PC-9 (cell line): ENCODE measurements at regions of chr6 and their contacts with region 1.

Region 1: GRCh38 chr6:100479179-100480035 is 14.7 kb upstream of the SIM1 start:
- DNase-seq: no peak
- H3K4me3 ChIP-seq: no peak overlapping the region
- H3K27ac ChIP-seq: no peak overlapping the region
- H3K4me1 ChIP-seq: no peaks in the 10 kb centered on the region
- H3K27me3 ChIP-seq: no peaks in the 10 kb centered on the region
- CTCF ChIP-seq: peak; percentile 83

Region 2: DNA sequence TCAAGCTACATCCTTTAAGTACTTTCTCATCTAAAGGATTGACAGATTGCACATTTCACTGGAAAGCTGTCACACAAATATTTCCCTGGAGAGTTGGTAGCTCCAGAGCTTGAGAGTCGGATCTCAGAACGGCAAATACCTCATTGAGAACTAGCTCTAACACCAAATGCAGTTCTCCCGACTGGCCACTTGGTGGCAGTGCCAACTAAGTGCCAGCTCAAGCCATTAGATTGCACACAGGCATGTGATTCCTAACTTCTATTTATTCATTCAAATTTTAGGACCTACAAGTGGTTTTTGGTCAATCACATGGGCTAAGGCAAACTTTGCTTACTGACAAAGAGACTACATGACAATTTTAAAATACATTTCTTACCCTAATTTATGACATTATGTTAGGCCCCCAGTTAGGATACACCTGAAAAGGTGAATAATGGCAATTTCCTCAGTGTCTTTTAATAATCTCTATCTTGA is 477.5 kb before region 1 on chr6:
- CTCF ChIA-PET with region 1: no interaction called
- POLR2A ChIA-PET with region 1: no interaction called
- intact Hi-C with region 1: loop called (anchors 1 kb)
- DNase-seq: peak; percentile 40 to 43
- H3K4me3 ChIP-seq: no peak overlapping the region
- H3K27ac ChIP-seq: no peak overlapping the region
- H3K4me1 ChIP-seq: no peaks in the 10 kb centered on the region
- H3K27me3 ChIP-seq: no peaks in the 10 kb centered on the region
- CTCF ChIP-seq: peak; percentile 97

Region 3: DNA sequence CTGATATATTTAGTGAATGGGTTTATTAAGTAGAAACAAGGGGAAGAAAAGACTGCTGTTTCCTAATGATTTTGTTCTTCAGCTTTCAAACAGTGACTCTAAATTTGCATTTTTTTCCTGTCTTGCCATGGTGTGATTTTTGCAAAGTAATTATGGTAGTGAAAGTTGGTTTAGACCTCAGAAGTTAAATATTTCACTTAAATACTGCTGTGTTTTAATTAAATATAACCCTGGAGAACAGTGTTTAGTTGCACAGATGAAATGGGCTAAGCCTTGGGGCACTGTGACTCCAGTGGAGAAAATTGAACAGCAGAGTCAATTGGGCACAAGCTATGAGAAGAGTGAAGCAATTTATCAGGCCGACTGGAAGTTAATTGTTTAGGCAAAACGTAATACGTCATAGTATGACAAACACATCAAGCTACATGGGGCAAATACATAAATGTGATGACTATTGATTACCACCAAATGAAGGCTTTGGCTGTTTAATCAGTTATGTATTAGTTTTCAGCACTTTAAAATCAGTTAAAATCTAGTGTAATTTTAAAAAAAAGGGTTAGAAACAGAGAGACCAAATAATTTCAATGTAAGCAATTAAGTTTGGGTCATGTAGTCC is 374.2 kb before region 1 on chr6:
- CTCF ChIA-PET with region 1: no interaction called
- POLR2A ChIA-PET with region 1: no interaction called
- intact Hi-C with region 1: no loop called
- DNase-seq: no peak
- H3K4me3 ChIP-seq: no peak overlapping the region
- H3K27ac ChIP-seq: no peak overlapping the region
- H3K4me1 ChIP-seq: no peaks in the 10 kb centered on the region
- H3K27me3 ChIP-seq: no peaks in the 10 kb centered on the region
- CTCF ChIP-seq: no peak

Region 4: DNA sequence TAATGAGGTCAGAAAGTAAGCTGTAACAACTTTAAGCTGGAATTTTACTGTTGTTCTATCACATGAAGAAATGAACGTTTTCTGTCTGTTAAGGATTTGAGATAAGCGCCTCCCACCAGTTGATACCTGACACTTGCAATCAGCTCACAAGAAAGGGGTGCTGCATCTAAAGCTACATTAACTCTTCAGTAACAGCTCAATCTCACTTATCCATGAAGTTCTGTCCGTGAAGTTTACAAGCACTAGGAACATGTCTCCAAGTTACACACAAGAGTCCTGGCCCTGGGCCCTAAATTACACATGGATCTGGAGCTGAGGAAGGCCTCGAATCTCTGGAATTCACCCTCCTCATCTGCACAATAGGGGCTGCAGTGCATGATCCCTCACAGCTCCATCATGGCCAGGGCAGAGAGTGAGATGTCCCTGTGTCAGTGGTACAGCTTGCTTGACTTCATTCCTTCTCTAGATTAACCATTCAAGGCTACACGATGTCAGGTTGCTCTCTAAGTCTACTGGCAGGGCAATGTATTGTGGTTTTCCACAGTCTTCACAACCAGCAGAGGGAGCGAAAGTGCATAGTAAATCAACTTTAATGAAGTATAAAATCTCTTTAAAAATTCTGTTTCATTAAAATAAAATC is 303.0 kb before region 1 on chr6:
- CTCF ChIA-PET with region 1: no interaction called
- POLR2A ChIA-PET with region 1: no interaction called
- intact Hi-C with region 1: loop called (anchors 2 kb)
- DNase-seq: peak; percentile 42 to 70
- H3K4me3 ChIP-seq: 0 out of 2 replicates have a peak overlapping the region, but pooled peaks have one; percentile 8
- H3K27ac ChIP-seq: peak overlapping the region; percentile 74
- H3K4me1 ChIP-seq: peaks cover 24% of the 10 kb centered on the region
- H3K27me3 ChIP-seq: no peaks in the 10 kb centered on the region
- CTCF ChIP-seq: peak; percentile 67

Region 5: GRCh38 chr6:100347901-100348550 is 131.4 kb before region 1 on chr6:
- CTCF ChIA-PET with region 1: interaction called, 10 read pairs
- POLR2A ChIA-PET with region 1: no interaction called
- intact Hi-C with region 1: loop called (anchors 5 kb)
- DNase-seq: no peak
- H3K4me3 ChIP-seq: no peak overlapping the region
- H3K27ac ChIP-seq: no peak overlapping the region
- H3K4me1 ChIP-seq: no peaks in the 10 kb centered on the region
- H3K27me3 ChIP-seq: no peaks in the 10 kb centered on the region
- CTCF ChIP-seq: no peak